Caco-2 (cell line): ENCODE measurements at regions of chrX and their contacts with region 1.

Region 1: GRCh38 chrX:53081925-53082772 is at the start of gene TSPYL2:
- DNase-seq: peak; percentile 95
- H3K4me3 ChIP-seq: peak within 1 kb of the TSS; percentile 76
- H3K4me3 Mint-ChIP-seq: peak within 1 kb of the TSS; percentile 90
- H3K27ac Mint-ChIP-seq: peak within 1 kb of the TSS; percentile 86
- H3K4me1 ChIP-seq: no peaks in the 10 kb centered on the region
- H3K4me1 Mint-ChIP-seq: peaks cover 7% of the 10 kb centered on the region
- H3K27me3 ChIP-seq: no peaks in the 10 kb centered on the region
- H3K27me3 Mint-ChIP-seq: no peaks in the 10 kb centered on the region
- CTCF ChIP-seq: no peak
- total RNA-seq, gene TSPYL2: 30.9 and 33.4 TPM in 2 replicates

Region 2: DNA sequence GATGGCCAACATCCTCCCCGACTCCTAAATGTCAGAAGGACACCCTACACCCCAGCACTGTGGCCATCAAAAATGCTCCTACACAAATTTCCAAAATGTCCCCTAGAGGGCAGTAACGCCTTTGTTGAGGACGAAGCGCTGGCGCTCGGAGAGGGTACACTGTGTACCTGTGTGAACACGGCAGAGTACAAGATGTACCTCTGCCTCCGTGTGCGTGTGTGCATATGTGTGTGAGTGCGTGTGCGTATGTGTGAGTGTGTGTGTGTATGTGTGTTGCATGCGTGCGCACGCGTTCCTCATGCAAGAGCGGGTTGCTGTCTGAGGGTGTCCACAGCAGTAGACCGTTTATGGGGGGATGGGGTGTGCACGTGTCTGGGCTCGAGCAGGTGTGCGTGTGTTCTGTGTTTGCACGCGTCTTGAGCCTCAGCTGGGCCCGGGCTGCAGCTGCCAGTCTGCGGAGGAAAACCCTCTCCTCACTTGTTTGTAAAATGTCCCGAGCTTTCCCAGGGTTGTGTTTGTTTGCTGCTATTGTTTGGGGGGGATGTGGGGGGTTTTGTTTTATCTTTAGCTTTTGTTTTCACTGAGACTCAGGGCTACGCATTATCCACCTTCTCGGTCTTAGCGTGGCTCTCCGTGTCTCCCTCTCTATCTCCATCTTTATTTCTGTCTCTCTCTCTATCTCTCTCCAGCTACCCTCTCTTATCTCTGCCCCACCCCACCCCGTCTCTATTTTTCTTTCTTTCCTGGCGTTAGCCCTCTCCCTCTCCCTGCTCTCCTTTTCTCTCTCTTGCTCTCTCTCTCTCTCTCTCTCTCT is 10.3 kb before region 1 on chrX:
- CTCF ChIA-PET with region 1: no interaction called
- POLR2A ChIA-PET with region 1: interaction called, 10 read pairs
- intact Hi-C with region 1: no loop called
- DNase-seq: peak; percentile 60 to 75
- H3K4me3 ChIP-seq: peak overlapping the region; percentile 54
- H3K4me3 Mint-ChIP-seq: peak overlapping the region; percentile 82
- H3K27ac Mint-ChIP-seq: peak overlapping the region; percentile 68
- H3K4me1 ChIP-seq: no peaks in the 10 kb centered on the region
- H3K4me1 Mint-ChIP-seq: peaks cover 8% of the 10 kb centered on the region
- H3K27me3 ChIP-seq: no peaks in the 10 kb centered on the region
- H3K27me3 Mint-ChIP-seq: no peaks in the 10 kb centered on the region
- CTCF ChIP-seq: peak; percentile 48 to 50

Region 3: DNA sequence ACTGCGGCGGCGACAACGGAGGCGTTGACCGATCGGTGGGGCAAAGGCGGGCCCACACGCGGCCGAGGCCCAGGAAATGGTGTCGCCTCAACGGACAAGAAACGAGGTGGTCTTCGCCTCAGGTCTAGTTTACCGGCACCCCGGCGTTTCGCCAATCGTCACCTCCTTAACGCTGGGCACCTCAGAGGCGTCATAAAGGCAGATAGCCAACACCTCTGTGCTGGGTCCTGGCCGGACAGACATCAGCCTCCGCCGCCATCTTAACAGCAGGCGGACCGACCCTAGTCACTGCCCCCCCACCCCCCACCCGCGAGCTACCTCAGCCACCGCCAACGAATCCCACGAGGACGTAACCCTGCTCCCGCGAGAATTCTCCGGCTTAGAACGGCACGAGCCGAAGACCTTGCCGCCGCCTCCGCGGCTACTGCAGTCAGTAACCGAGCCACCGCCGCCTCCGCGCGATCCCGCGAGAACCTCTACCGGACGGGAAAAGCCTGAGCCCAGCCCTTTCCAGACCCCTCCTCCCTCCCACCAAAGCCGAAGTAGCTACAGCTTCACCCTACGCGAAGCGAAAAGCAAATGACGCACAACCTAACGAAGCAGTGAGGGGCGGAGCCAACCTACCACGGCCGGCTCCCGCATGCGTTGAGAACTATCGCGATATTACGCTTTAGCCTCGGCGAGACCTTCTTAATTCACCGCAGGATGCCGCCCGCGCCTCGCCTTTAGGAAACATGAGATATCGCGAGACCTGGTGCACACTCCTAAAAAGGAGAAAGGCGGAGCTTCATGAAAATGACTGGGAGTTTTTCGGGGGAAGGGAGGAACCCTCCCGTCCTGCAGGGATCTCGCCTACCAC is 601.6 kb after region 1 on chrX:
- CTCF ChIA-PET with region 1: no interaction called
- POLR2A ChIA-PET with region 1: no interaction called
- intact Hi-C with region 1: loop called (anchors 5 kb)
- DNase-seq: peak; percentile 91 to 96
- H3K4me3 ChIP-seq: peak overlapping the region; percentile 81
- H3K4me3 Mint-ChIP-seq: peak overlapping the region; percentile 94
- H3K27ac Mint-ChIP-seq: peak overlapping the region; percentile 91
- H3K4me1 ChIP-seq: no peaks in the 10 kb centered on the region
- H3K4me1 Mint-ChIP-seq: peaks cover 6% of the 10 kb centered on the region
- H3K27me3 ChIP-seq: no peaks in the 10 kb centered on the region
- H3K27me3 Mint-ChIP-seq: no peaks in the 10 kb centered on the region
- CTCF ChIP-seq: no peak